ENCODE measurements at regions of chr6 and their contacts with region 1.

Region 1: GRCh38 chr6:52049252-52050050 is 38.0 kb downstream of the PKHD1 start:
- DNase-seq: no peak
- ATAC-seq: no peak
- H3K4me3 Mint-ChIP-seq: no peak overlapping the region
- H3K27ac Mint-ChIP-seq: no peak overlapping the region
- H3K4me1 Mint-ChIP-seq: no peaks in the 10 kb centered on the region
- H3K27me3 Mint-ChIP-seq: peaks cover 55% of the 10 kb centered on the region

Region 2: DNA sequence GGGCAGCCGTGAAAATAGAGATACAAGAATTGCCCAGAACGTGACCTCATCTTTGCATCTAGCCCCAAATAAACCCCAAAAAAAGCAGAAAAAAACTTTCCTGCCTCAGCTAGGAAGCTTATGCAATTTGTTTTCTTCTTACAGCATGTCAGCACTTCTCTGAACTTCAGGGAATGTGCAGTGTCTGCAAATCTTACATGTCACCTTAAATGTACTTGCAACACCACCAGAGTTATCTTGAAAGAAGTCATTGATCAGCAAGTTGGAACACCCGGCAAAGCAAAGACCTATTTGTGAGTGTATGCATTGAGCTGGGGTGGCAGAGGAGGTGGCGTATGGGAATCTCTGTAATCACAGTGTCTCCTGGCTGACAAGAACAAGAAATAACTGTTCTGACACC is 85.5 kb before region 1 on chr6:
- CTCF ChIA-PET with region 1: no interaction called
- DNase-seq: no peak
- ATAC-seq: no peak
- H3K4me3 Mint-ChIP-seq: no peak overlapping the region
- H3K27ac Mint-ChIP-seq: no peak overlapping the region
- H3K4me1 Mint-ChIP-seq: no peaks in the 10 kb centered on the region
- H3K27me3 Mint-ChIP-seq: peaks cover 11% of the 10 kb centered on the region

Region 3: DNA sequence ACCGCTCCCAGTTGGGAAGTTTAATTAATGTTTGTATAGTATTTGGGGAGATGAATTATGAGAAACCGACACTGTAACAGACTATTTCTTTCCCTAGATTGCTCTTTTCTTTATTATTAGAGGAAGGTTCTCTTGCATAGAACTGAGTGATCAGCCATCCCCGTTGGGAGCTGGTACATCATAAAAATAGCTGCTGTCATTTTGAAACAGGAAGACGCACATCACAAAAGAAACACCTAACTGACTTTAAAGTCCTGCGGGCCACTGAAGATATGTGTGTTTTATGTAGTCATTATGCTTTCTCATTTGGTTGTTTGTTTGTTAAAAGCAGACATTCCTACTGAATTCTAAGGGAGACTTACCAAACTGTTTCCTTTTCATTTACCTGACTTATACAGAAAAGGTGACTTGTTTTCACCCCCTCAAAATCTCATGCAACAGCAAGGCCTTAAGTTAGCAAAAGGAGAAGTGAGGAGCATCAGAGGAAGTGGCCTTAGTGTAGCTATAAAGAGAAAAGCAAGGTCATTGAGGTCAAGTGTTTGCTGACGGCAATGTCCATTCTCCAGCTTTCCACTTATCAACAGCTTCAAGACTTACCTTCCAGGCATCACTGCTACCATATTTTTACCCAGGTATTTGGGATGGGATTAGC is 53.0 kb before region 1 on chr6:
- CTCF ChIA-PET with region 1: no interaction called
- DNase-seq: no peak
- ATAC-seq: no peak
- H3K4me3 Mint-ChIP-seq: no peak overlapping the region
- H3K27ac Mint-ChIP-seq: no peak overlapping the region
- H3K4me1 Mint-ChIP-seq: no peaks in the 10 kb centered on the region
- H3K27me3 Mint-ChIP-seq: peaks cover 6% of the 10 kb centered on the region

Region 4: DNA sequence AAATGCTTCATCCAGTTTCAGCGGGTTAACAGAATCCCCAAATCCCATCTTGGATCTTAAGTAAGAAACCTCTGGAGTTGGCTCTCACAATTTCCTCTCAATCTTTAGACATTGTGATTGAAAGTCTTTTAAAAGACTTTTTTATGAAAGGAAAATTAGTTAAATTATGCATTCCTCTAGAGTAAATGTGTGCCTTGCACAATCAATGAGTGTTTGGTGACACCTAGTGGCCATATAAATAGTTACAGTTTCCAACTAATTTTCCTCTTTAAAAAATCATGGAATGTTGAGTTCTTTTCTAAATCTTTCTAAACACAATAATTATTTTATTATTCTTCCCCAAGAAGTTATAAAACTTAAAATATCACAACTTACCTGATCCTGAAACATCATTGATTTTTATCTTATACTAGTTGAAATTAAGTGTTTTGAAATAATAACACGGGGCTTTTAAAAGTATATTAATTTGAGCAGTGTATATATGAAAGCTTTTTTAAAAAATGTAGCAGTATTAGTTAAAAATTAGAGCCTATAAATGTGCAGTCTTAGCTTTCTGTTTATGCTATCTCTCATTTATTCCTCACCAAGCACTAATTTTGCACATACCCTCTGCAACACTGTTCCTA is 28.4 kb before region 1 on chr6:
- CTCF ChIA-PET with region 1: interaction called, 11 read pairs
- DNase-seq: no peak
- ATAC-seq: no peak
- H3K4me3 Mint-ChIP-seq: no peak overlapping the region
- H3K27ac Mint-ChIP-seq: no peak overlapping the region
- H3K4me1 Mint-ChIP-seq: no peaks in the 10 kb centered on the region
- H3K27me3 Mint-ChIP-seq: peaks cover 29% of the 10 kb centered on the region

Region 5: GRCh38 chr6:52061481-52061880 is 12.0 kb after region 1 on chr6:
- CTCF ChIA-PET with region 1: interaction called, 10 read pairs
- DNase-seq: no peak
- ATAC-seq: no peak
- H3K4me3 Mint-ChIP-seq: no peak overlapping the region
- H3K27ac Mint-ChIP-seq: no peak overlapping the region
- H3K4me1 Mint-ChIP-seq: peaks cover 11% of the 10 kb centered on the region
- H3K27me3 Mint-ChIP-seq: peaks cover 28% of the 10 kb centered on the region

Measured in activated CD8-positive, alpha-beta memory T cell treated with anti-CD3 and anti-CD28 coated beads, Interleukin-2, amount 10 ng/mL, durations not matched to agents 7 days and 5 days (primary cell).